IMR-90 (cell line): ENCODE measurements at regions of chr20 and their contacts with region 1.

Region 1: GRCh38 chr20:45771182-45771759 is 20.4 kb downstream of the WFDC3 start:
- DNase-seq: peak; percentile 80
- ATAC-seq: peak; percentile 93
- H3K4me3 ChIP-seq: no peak overlapping the region
- H3K27ac ChIP-seq: peak overlapping the region; percentile 69; the same call in 1 of the 2 replicates
- H3K4me1 ChIP-seq: peaks cover 7% of the 10 kb centered on the region
- H3K27me3 ChIP-seq: peaks cover 21% of the 10 kb centered on the region
- CTCF ChIP-seq: peak; percentile 97
- POLR2A ChIP-seq: no peak
- RAD21 ChIP-seq: peak; percentile 91

Region 2: GRCh38 chr20:44966030-44966961 is 805.0 kb before region 1 on chr20 and contains the start of gene STK4:
- CTCF ChIA-PET with region 1: no interaction called
- POLR2A ChIA-PET with region 1: no interaction called
- dilution Hi-C with region 1: no loop called
- in situ Hi-C with region 1: no loop called
- intact Hi-C with region 1: loop called (anchors 10 kb)
- DNase-seq: peak; percentile 87
- ATAC-seq: peak; percentile 96
- H3K4me3 ChIP-seq: peak within 1 kb of the TSS; percentile 72
- H3K27ac ChIP-seq: peak within 1 kb of the TSS; percentile 90
- H3K4me1 ChIP-seq: peaks cover 8% of the 10 kb centered on the region; the same call in 1 of the 2 replicates
- H3K27me3 ChIP-seq: no peaks in the 10 kb centered on the region
- CTCF ChIP-seq: peak; percentile 54
- POLR2A ChIP-seq: peak; percentile 74
- RAD21 ChIP-seq: peak; percentile 35; the same call in 1 of the 2 replicates
- total RNA-seq, gene STK4: 22.2 and 30.0 TPM in 2 replicates

Region 3: DNA sequence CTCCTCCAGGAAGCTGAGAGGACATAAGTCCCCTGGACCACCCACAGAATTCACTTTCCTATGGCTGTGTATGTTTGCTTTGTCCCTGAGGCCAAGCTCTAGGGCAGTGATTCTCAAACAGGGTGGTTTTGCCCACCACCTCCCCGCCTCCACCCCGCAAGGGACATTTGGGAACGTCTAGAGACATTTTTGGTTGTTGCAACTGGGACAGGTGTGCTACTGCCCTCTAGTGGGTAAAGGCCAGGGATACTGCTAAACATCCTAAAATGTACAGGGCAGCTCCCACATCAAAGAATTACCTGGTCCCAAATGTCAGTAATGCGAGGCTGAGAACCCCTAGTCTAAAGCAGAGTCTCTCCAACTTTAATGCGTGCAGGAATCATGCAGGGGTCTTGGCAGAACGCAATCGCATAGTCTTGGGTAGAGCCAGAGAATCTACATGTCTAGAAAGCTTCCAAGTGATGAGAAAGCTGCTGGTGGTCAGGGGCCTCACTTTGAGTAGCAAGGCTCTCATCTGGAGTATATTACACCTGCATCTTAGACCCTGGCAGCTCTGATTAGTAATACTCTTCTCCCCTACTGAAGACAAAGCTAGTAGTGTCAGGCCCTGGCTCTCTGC is 675.4 kb before region 1 on chr20:
- CTCF ChIA-PET with region 1: no interaction called
- POLR2A ChIA-PET with region 1: no interaction called
- dilution Hi-C with region 1: no loop called
- in situ Hi-C with region 1: no loop called
- intact Hi-C with region 1: loop called (anchors 10 kb)
- DNase-seq: peak; percentile 69
- ATAC-seq: peak; percentile 84
- H3K4me3 ChIP-seq: no peak overlapping the region
- H3K27ac ChIP-seq: no peak overlapping the region
- H3K4me1 ChIP-seq: peaks cover 4% of the 10 kb centered on the region; the same call in 1 of the 2 replicates
- H3K27me3 ChIP-seq: peaks cover 37% of the 10 kb centered on the region
- CTCF ChIP-seq: peak; percentile 79
- POLR2A ChIP-seq: no peak
- RAD21 ChIP-seq: peak; percentile 79

Region 4: DNA sequence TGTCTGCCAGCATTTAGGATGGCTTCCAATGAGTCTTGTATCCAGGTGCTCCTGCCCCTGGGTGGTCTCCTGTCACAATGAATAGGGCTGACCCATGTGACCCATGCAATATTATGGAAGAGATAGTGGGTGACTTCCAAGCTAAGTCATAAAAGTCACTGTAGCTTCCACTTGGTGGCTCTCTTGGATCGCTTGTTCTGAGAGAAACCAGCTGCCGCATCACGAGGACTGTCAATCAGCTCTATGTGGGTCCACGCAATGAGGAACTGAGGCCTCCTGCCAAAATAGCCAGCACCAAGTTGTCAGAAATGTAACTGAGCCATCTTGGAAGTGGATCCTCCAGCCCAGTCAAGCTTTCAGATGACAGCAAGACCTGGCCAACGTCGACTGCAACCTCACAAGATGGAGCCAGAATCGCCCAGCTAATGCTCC is 448.3 kb before region 1 on chr20:
- CTCF ChIA-PET with region 1: interaction called, 10 read pairs
- POLR2A ChIA-PET with region 1: no interaction called
- dilution Hi-C with region 1: no loop called
- in situ Hi-C with region 1: loop called (anchors 5 kb)
- intact Hi-C with region 1: loop called (anchors 1 kb)
- DNase-seq: peak; percentile 43
- ATAC-seq: peak; percentile 8; the same call in 1 of the 2 replicates
- H3K4me3 ChIP-seq: no peak overlapping the region
- H3K27ac ChIP-seq: no peak overlapping the region
- H3K4me1 ChIP-seq: no peaks in the 10 kb centered on the region
- H3K27me3 ChIP-seq: peaks cover 5% of the 10 kb centered on the region; the same call in 1 of the 2 replicates
- CTCF ChIP-seq: peak; percentile 30; the same call in 1 of the 2 replicates
- POLR2A ChIP-seq: no peak
- RAD21 ChIP-seq: peak; percentile 30; the same call in 1 of the 2 replicates

Region 5: GRCh38 chr20:45373353-45374100 is 397.7 kb before region 1 on chr20:
- CTCF ChIA-PET with region 1: interaction called, 6 read pairs
- POLR2A ChIA-PET with region 1: no interaction called
- dilution Hi-C with region 1: no loop called
- in situ Hi-C with region 1: no loop called
- intact Hi-C with region 1: loop called (anchors 1 kb)
- DNase-seq: peak; percentile 66
- ATAC-seq: peak; percentile 89
- H3K4me3 ChIP-seq: peak overlapping the region; percentile 37
- H3K27ac ChIP-seq: no peak overlapping the region
- H3K4me1 ChIP-seq: no peaks in the 10 kb centered on the region; the same call in 1 of the 2 replicates
- H3K27me3 ChIP-seq: no peaks in the 10 kb centered on the region
- CTCF ChIP-seq: peak; percentile 80
- POLR2A ChIP-seq: no peak
- RAD21 ChIP-seq: peak; percentile 75

Region 6: DNA sequence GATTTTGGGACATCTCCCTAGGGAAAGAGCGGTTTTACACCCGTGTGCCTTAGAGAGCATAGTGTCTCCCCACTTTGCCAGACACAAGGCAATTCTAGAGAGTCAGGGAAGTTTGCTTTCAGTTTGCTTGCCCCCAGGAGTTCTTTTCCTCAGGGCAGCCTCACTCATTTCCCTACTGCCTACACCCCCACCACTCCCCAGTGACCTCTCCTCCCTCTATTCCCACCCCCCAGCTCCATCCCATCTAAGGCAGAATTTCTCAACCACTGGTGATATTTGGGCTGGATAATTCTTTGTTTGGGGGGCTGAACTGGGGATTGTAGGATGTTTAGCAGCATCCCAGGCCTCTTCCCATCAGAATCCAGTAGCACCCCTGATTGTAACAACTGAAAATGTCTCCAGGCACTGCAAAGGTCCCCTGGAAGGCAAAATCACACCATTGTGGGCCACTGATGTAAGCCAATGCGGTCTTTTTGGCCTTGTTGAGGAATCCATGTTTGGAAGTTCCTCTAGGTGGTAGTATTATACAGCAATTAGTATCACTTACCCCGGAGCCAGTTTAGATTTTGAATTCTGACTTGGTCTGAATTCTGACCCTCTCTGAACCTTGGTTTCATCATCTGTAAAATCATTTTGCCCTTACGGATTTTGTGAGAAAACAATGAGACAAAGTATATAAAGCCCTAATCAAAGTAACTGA is 225.4 kb before region 1 on chr20:
- CTCF ChIA-PET with region 1: no interaction called
- POLR2A ChIA-PET with region 1: no interaction called
- dilution Hi-C with region 1: no loop called
- in situ Hi-C with region 1: loop called (anchors 25 kb)
- intact Hi-C with region 1: loop called (anchors 1 kb)
- DNase-seq: peak; percentile 37
- ATAC-seq: peak; percentile 69
- H3K4me3 ChIP-seq: no peak overlapping the region
- H3K27ac ChIP-seq: no peak overlapping the region
- H3K4me1 ChIP-seq: no peaks in the 10 kb centered on the region
- H3K27me3 ChIP-seq: peaks cover 5% of the 10 kb centered on the region
- CTCF ChIP-seq: peak; percentile 56
- POLR2A ChIP-seq: no peak
- RAD21 ChIP-seq: peak; percentile 65

Region 7: GRCh38 chr20:45704969-45705637 is 66.2 kb before region 1 on chr20 and contains the start of gene WFDC10B:
- CTCF ChIA-PET with region 1: no interaction called
- POLR2A ChIA-PET with region 1: no interaction called
- dilution Hi-C with region 1: no loop called
- in situ Hi-C with region 1: no loop called
- intact Hi-C with region 1: no loop called
- DNase-seq: no peak
- ATAC-seq: no peak
- H3K4me3 ChIP-seq: no peak within 1 kb of the TSS
- H3K27ac ChIP-seq: no peak within 1 kb of the TSS
- H3K4me1 ChIP-seq: no peaks in the 10 kb centered on the region
- H3K27me3 ChIP-seq: no peaks in the 10 kb centered on the region
- CTCF ChIP-seq: no peak
- POLR2A ChIP-seq: no peak
- RAD21 ChIP-seq: no peak
- total RNA-seq, gene WFDC10B: not detected in 2 replicates

Region 8: DNA sequence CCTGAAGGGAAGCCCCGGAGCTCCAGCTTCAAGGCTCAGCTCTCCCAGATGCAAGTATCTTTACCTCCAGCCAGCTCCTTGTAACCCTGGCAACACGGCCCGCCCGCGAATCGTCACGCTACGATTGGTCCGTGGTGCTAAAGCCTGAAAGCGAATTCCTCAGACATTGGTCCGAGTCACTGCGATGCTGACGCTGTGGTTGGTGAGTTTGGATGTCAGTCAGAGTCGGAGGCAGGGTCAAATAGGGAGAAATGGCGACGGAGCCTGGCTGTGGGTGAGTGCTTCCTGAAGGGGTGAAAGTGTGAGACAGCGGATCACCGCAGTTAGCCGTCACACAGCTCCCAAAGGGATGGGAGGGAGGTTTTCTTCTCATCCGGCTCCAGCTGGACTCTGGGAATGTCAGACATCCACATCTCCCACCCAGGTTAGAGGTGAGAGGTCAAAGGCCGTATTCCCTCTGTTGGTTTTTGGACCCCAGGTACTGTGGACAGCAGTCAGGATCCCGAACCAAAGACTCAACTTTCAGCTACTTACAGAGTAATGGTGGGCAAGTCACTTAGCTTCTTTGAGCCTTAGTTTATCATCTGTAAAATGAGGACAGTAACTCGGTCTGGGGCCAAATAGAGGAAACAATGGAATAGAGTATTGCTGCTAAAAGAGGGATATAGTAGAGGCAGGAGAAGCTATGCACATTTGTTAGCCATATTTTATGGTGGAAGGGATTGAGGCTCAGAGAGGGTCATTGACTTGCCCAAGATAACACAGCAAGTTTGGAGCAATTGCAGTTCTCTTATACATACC is 109.9 kb after region 1 on chr20 and contains the start of gene ZSWIM1:
- CTCF ChIA-PET with region 1: no interaction called
- POLR2A ChIA-PET with region 1: no interaction called
- dilution Hi-C with region 1: no loop called
- in situ Hi-C with region 1: no loop called
- intact Hi-C with region 1: no loop called
- DNase-seq: peak; percentile 99
- ATAC-seq: peak; percentile 98
- H3K4me3 ChIP-seq: peak within 1 kb of the TSS; percentile 52
- H3K27ac ChIP-seq: peak within 1 kb of the TSS; percentile 72
- H3K4me1 ChIP-seq: peaks cover 2% of the 10 kb centered on the region; the same call in 1 of the 2 replicates
- H3K27me3 ChIP-seq: no peaks in the 10 kb centered on the region
- CTCF ChIP-seq: no peak
- POLR2A ChIP-seq: peak; percentile 92
- RAD21 ChIP-seq: no peak
- total RNA-seq, gene ZSWIM1: 7.8 and 10.0 TPM in 2 replicates

Region 9: DNA sequence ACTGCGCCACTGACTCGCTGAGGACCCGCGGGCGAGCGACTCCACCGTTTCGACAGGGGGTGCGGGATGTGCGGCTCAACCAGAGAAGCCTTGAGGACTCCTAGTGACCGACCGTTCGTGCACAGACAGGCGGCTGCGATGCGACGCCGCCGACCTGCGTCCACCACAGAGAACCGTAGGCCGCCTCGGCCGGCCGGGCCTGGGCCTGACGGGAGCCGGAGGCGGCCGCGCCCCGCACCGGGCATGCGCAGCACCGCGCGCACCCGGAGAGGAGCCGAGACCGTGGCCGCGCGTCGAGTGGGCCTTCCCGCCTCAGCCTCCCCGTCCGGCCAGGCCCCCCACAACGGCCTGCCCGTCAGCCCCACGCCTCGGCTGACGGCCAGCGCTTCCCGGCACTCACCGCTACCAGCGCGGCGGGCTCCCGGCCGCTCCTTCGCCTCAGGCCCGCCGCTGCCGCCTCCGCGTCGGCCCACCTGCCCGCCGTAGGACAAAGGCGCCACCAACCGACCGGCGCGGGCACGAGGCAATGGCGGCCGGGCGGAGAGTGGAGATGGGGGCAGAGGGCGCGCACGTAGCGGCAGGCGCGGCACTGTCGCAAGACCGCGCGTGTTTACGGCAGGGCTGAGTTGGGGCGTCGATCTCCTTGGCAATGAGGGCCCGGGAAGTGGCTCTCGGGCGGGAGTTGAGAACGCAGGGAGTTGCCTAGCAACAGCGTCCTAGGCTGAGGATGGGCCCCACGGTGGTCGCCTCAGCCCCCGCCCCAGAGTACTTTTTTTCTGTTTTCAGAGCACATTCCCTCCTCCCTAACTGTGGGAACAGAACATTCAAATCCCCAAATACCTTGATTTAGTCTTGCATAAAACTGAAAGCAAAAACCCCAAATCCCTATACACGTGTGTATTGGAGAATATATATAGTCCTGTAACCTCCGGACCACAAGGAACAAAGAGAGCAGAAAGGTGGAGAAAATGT is 318.4 kb after region 1 on chr20 and contains the start of gene NCOA5:
- CTCF ChIA-PET with region 1: no interaction called
- POLR2A ChIA-PET with region 1: no interaction called
- dilution Hi-C with region 1: no loop called
- in situ Hi-C with region 1: no loop called
- intact Hi-C with region 1: loop called (anchors 10 kb)
- DNase-seq: peak; percentile 95
- ATAC-seq: peak; percentile 94
- H3K4me3 ChIP-seq: peak within 1 kb of the TSS; percentile 91
- H3K27ac ChIP-seq: peak within 1 kb of the TSS; percentile 97
- H3K4me1 ChIP-seq: peaks cover 7% of the 10 kb centered on the region
- H3K27me3 ChIP-seq: no peaks in the 10 kb centered on the region
- CTCF ChIP-seq: peak; percentile 44
- POLR2A ChIP-seq: peak; percentile 94
- RAD21 ChIP-seq: no peak
- total RNA-seq, gene NCOA5: 20.6 and 22.5 TPM in 2 replicates